Ascending aorta (tissue), 2 donors: ENCODE measurements at regions of chr9 and their contacts with region 1.

Region 1: DNA sequence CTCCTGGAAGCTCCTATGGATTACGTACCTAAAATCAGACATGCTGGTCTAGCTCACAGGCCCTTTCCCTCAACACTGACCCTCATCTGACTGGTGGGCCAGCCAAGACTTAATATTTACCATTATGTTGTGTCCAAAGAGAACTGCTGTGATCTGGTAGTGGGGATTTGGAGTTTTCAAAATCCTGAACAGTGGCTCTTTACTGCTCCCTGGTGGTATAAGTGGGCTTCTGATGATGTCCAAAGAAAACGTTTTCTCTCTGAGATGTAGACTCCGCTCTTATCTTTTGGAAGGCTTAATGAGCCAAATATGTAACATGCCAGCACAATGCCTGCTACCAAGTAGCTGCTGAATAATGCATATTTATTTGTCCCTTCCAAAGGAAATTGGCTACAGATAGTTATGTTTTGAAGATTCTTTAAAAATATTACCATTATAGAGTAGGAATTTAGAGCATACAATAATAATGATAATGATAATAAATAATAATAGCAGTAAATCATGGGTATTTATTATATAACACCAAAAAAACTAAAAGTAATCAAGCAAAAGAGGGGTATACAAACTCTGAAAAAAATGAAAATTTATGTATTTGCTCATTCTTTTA is 406.6 kb upstream of the TNC start:
- DNase-seq: peak in 1 of 2 donors; percentile 66
- H3K4me3 ChIP-seq: no peak overlapping the region
- H3K27ac ChIP-seq: no peak overlapping the region
- H3K4me1 ChIP-seq: peaks cover 0 to 3% of the 10 kb centered on the region in 2 donors
- H3K27me3 ChIP-seq: no peaks in the 10 kb centered on the region
- CTCF ChIP-seq: peak; percentile 69 to 82 (median 70)

Region 2: GRCh38 chr9:114662081-114662989 is 862.2 kb before region 1 on chr9:
- intact Hi-C with region 1: loop called (anchors 5 kb)
- DNase-seq: no peak
- H3K4me3 ChIP-seq: no peak overlapping the region
- H3K27ac ChIP-seq: no peak overlapping the region
- H3K4me1 ChIP-seq: no peaks in the 10 kb centered on the region
- H3K27me3 ChIP-seq: no peaks in the 10 kb centered on the region
- CTCF ChIP-seq: peak; percentile 64 to 73 (median 67)

Region 3: DNA sequence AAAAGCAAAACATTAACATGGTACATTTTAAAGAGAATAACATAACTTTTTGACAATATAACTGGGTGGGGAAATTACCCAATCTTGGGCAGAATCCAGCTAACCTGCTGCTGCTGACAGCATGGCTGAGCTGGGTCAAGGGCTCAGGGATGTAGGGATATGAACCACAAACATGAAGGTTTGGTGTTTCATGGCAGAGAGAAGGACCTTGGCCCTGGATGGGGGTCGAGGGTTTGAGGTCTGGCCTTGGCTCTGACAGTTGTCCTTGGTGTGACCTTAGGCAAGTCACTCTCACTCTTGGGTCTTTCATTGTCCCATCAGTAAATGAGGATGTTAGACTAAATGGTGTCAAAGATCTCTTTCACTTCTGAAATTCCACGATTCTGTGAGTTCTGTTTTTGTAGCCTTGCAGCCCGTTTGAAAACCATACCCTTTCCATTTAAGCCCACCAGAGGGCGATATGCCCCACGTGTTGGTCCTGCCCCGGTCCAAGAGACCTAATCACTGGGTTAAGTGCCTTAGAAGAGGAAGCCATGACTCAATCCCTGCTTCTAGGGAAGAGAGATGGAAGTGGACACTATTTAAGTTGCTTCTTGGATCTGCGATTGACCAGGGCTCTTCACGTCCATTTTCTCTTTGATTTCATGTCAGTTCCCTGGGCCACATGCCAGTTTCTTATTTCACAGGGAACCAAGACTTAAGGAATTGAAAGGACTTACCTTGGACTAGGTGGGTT is 785.8 kb before region 1 on chr9:
- intact Hi-C with region 1: loop called (anchors 1 kb)
- DNase-seq: peak in 1 of 2 donors; percentile 86
- H3K4me3 ChIP-seq: no peak overlapping the region
- H3K27ac ChIP-seq: no peak overlapping the region
- H3K4me1 ChIP-seq: no peaks in the 10 kb centered on the region
- H3K27me3 ChIP-seq: no peaks in the 10 kb centered on the region
- CTCF ChIP-seq: peak; percentile 70 to 76 (median 70)

Region 4: DNA sequence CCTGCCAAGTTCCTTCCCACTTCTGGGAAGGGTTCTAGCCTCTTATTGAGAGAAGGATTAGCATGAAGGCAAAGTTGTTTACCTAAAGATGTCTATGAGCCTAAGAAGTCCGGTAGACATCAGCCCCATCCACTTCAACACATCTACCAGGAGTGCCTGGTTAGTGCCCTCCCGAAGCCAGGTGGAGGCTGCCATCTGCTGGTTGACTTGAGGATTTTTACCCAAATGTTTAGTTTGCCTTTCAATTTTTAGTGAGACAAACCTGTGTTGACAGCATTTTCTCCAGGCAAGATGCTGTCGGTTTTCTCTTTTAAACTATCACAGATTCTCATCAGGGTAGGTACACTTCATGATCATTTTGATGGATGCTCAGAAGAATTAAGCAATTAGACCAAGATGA is 510.6 kb before region 1 on chr9:
- intact Hi-C with region 1: loop called (anchors 5 kb)
- DNase-seq: no peak
- H3K4me3 ChIP-seq: no peak overlapping the region
- H3K27ac ChIP-seq: no peak overlapping the region
- H3K4me1 ChIP-seq: no peaks in the 10 kb centered on the region
- H3K27me3 ChIP-seq: no peaks in the 10 kb centered on the region
- CTCF ChIP-seq: peak; percentile 76 to 80 (median 77)

Region 5: DNA sequence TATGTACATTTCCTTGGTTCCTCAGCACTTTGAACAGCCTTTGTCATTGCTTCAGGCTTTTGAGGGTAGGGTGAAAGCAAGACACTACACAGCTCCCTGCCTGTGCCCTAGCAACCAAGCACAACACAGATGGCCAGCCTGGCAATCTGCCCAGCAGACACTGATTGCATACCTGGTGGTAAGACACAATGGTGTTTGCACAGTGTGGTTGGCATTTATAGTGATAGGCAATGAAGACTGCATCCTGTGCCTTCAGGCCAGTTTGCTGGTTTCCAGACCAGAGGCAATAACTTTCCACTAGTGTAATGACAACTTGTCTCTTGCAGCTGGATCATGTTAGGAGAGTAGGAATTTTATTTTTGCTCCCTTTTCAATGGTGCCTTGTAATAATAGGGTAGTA is 262.1 kb before region 1 on chr9:
- intact Hi-C with region 1: loop called (anchors 10 kb)
- DNase-seq: no peak
- H3K4me3 ChIP-seq: no peak overlapping the region
- H3K27ac ChIP-seq: no peak overlapping the region
- H3K4me1 ChIP-seq: peaks cover 0 to 9% of the 10 kb centered on the region in 2 donors
- H3K27me3 ChIP-seq: no peaks in the 10 kb centered on the region
- CTCF ChIP-seq: no peak

Region 6: GRCh38 chr9:115548609-115549260 is 24.2 kb after region 1 on chr9:
- intact Hi-C with region 1: no loop called
- DNase-seq: no peak
- H3K4me3 ChIP-seq: no peak overlapping the region
- H3K27ac ChIP-seq: no peak overlapping the region
- H3K4me1 ChIP-seq: no peaks in the 10 kb centered on the region
- H3K27me3 ChIP-seq: no peaks in the 10 kb centered on the region
- CTCF ChIP-seq: no peak